ENCODE measurements at regions of chr18 and their contacts with region 1.

Region 1: DNA sequence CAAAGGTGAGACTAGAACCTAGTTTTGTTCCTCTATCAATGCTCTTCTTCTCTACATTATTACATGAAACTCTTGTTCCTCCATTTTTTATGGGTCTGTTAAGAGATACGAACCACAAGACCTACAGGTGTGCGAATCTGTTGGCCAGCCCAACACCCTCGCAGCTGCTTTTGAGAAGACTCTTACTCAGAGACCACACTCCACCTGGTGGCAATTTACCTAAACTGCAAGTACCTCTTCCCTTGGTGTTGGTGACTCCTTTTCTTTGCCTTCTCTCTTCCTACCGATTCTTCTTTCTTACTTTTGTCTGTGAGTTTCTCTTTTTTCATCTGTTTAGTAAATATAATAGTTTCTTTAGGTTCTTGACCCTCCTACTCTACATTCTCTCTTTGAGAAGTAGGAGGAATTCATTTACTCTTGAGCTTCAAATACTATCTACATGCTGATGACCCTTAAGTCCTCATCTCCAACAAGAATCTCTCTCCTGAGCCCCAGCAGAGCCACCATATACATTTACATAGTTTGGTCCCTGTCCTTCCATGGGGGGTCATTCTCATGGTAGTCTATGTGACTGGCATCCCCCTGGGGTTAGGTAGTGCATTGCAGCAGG is 81.8 kb upstream of the GAREM1 start:
- DNase-seq: peak; percentile 69
- ATAC-seq: peak; percentile 80
- H3K4me3 ChIP-seq: no peak overlapping the region
- H3K27ac ChIP-seq: no peak overlapping the region
- H3K4me1 ChIP-seq: no peaks in the 10 kb centered on the region
- H3K27me3 ChIP-seq: no peaks in the 10 kb centered on the region
- CTCF ChIP-seq: peak; percentile 78
- POLR2A ChIP-seq: no peak
- RAD21 ChIP-seq: peak; percentile 79

Region 2: DNA sequence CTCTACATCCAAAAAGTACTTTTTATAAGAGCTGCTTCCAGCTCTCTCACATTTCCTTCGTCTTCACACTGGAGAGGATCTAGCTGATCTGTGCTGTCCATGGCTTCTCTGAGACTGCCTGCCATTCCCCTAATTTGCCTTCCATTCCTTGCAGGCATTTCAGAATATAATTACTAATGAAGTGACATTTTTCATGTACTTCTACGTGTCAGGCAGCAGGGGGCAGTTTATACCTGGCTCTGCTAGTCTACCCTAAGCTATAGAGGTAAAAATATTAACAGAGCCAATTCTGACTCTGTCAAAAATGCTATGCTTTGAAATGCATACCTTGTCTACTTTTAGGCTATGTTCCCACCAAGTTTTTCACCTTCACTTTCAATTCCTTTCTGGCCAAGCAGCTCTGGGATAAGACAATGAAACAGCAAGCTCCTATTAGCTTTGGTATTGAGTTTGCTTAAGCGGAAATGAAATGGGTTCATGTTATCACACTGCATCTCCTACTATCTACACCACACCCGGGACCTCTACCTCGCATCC is 280.8 kb before region 1 on chr18:
- CTCF ChIA-PET with region 1: interaction called, 4 read pairs
- POLR2A ChIA-PET with region 1: no interaction called
- dilution Hi-C with region 1: no loop called
- in situ Hi-C with region 1: loop called (anchors 5 kb)
- intact Hi-C with region 1: loop called (anchors 1 kb)
- DNase-seq: peak; percentile 55
- ATAC-seq: peak; percentile 95
- H3K4me3 ChIP-seq: no peak overlapping the region
- H3K27ac ChIP-seq: no peak overlapping the region
- H3K4me1 ChIP-seq: no peaks in the 10 kb centered on the region
- H3K27me3 ChIP-seq: no peaks in the 10 kb centered on the region
- CTCF ChIP-seq: peak; percentile 92
- POLR2A ChIP-seq: no peak
- RAD21 ChIP-seq: peak; percentile 97

Region 3: GRCh38 chr18:32276906-32277305 is 275.6 kb before region 1 on chr18:
- CTCF ChIA-PET with region 1: interaction called, 4 read pairs
- POLR2A ChIA-PET with region 1: no interaction called
- dilution Hi-C with region 1: no loop called
- in situ Hi-C with region 1: loop called (anchors 5 kb)
- intact Hi-C with region 1: no loop called
- DNase-seq: no peak
- ATAC-seq: no peak
- H3K4me3 ChIP-seq: no peak overlapping the region
- H3K27ac ChIP-seq: no peak overlapping the region
- H3K4me1 ChIP-seq: no peaks in the 10 kb centered on the region
- H3K27me3 ChIP-seq: no peaks in the 10 kb centered on the region
- CTCF ChIP-seq: no peak
- POLR2A ChIP-seq: no peak
- RAD21 ChIP-seq: no peak

Measured in IMR-90 (cell line).